Mucosa of descending colon (tissue), 3 donors: ENCODE measurements at regions of chr1 and their contacts with region 1.

Region 1: DNA sequence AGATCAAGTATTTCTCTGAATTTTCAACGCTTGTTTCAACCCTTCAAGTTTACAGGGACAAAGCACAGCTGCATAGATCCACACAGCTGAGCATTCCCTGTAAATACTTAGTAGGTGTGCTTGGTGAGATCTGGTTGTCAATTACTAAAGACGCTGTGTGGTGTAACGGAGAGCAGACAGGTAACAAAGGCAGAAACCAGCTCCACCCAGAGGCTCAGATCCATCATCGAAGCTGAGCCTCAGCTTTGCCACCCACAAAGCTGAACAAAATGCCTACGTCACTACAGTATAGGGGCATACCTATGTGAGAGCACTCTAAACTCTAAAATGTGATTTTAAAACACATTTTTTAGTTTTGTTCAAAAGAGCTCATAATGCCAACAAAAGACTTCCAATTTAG is 38.7 kb downstream of the PACC1 start:
- DNase-seq: no peak
- ATAC-seq: no peak
- H3K4me3 ChIP-seq: no peak overlapping the region
- H3K4me1 ChIP-seq: no peaks in the 10 kb centered on the region
- CTCF ChIP-seq: no peak

Region 2: GRCh38 chr1:212455803-212456528 is 80.0 kb after region 1 on chr1:
- intact Hi-C with region 1: loop called in 1 of 2 experiments (anchors 5 kb)
- DNase-seq: peak; percentile 78 to 93 (median 89)
- ATAC-seq: peak; percentile 84
- H3K4me3 ChIP-seq: no peak overlapping the region
- H3K4me1 ChIP-seq: no peaks in the 10 kb centered on the region
- CTCF ChIP-seq: peak; percentile 94